ENCODE measurements at regions of chr11 and their contacts with region 1.

Region 1: GRCh38 chr11:72831513-72832300 is 17.5 kb downstream of the ATG16L2 start:
- DNase-seq: peak; percentile 57
- ATAC-seq: peak; percentile 69
- H3K4me3 ChIP-seq: no peak overlapping the region
- H3K4me3 Mint-ChIP-seq: no peak overlapping the region
- H3K27ac ChIP-seq: peak overlapping the region; percentile 22 to 38
- H3K27ac Mint-ChIP-seq: peak overlapping the region; percentile 86
- H3K4me1 ChIP-seq: peaks cover 0 to 14% of the 10 kb centered on the region in 2 donors
- H3K4me1 Mint-ChIP-seq: peaks cover 24% of the 10 kb centered on the region
- H3K27me3 ChIP-seq: no peaks in the 10 kb centered on the region
- H3K27me3 Mint-ChIP-seq: no peaks in the 10 kb centered on the region
- CTCF ChIP-seq: peak; percentile 77

Region 2: DNA sequence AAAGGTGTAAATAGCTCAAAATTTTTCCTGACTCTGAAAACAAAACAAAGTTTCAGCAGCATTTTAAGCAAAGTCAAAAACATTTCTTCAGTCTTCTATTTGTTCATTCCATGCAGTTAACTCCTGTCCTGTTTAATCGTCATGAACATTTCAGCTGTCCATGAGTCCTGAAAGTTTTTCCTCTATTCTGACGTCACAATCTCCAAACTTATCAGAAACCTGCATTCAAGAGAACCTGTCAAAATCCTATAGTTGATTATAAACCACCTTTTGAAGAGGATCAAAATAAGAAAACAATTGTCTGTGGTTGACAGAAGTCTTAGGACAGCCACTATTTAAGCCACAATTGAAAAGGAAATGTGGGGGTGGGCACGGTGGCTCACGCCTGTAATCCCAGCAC is 680.8 kb before region 1 on chr11:
- CTCF ChIA-PET with region 1: no interaction called
- POLR2A ChIA-PET with region 1: no interaction called
- intact Hi-C with region 1: no loop called
- DNase-seq: no peak
- ATAC-seq: no peak
- H3K4me3 ChIP-seq: no peak overlapping the region
- H3K4me3 Mint-ChIP-seq: no peak overlapping the region
- H3K27ac ChIP-seq: no peak overlapping the region
- H3K27ac Mint-ChIP-seq: no peak overlapping the region
- H3K4me1 ChIP-seq: no peaks in the 10 kb centered on the region
- H3K4me1 Mint-ChIP-seq: no peaks in the 10 kb centered on the region
- H3K27me3 ChIP-seq: peaks cover 0 to 3% (median 1%) of the 10 kb centered on the region in 4 experiments
- H3K27me3 Mint-ChIP-seq: no peaks in the 10 kb centered on the region
- CTCF ChIP-seq: no peak

Region 3: DNA sequence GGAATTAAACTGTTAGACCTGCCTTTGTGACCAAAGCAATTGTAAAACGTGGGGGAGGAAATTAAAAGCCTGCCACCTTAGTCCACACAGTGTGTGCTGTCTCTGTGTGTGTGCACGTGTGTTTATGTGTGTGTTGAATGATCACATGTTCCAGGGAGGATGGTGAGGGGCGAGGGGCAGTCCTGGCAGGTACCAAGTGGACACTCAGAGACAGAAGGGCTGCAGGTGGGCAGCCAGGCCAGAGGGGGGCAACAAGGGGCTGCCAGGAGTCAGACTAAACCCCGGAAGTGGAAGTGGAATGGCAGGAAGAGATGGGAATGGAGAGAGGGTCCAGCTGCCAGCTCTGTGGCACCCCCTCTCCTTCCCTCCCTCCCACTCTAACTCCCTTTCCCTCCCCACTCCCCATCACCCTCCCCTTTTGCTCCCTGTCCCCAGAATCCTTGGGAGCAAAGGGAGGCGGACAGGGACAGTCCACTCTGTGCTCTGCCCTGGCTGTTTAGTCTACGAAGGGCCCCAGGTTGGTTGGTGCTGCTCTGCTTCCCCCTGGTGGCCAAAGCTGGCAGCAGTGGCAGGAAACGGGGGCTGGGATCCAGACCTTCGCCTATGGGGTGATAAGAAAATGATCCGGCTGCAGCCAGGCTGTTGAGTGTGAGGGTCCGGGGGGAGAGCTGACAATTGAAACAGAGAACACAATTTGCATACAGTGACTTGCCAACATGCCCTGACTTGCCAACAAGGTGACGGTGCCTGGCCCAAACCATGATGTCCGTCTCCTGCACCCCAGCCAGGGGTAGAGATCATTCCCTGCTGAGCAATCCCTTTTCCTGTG is 410.8 kb after region 1 on chr11:
- CTCF ChIA-PET with region 1: interaction called, 16 read pairs
- POLR2A ChIA-PET with region 1: no interaction called
- intact Hi-C with region 1: no loop called
- DNase-seq: peak; percentile 81
- ATAC-seq: peak; percentile 89
- H3K4me3 ChIP-seq: no peak overlapping the region
- H3K4me3 Mint-ChIP-seq: no peak overlapping the region
- H3K27ac ChIP-seq: no peak overlapping the region
- H3K27ac Mint-ChIP-seq: no peak overlapping the region
- H3K4me1 ChIP-seq: peaks cover 4 to 7% of the 10 kb centered on the region in 2 donors
- H3K4me1 Mint-ChIP-seq: peaks cover 6% of the 10 kb centered on the region
- H3K27me3 ChIP-seq: peaks cover 0 to 2% (median 0%) of the 10 kb centered on the region in 4 experiments
- H3K27me3 Mint-ChIP-seq: peaks cover 3% of the 10 kb centered on the region
- CTCF ChIP-seq: peak; percentile 79